Left ventricle myocardium inferior (tissue), 1 donor: ENCODE measurements at regions of chr5 and their contacts with region 1.

Region 1: DNA sequence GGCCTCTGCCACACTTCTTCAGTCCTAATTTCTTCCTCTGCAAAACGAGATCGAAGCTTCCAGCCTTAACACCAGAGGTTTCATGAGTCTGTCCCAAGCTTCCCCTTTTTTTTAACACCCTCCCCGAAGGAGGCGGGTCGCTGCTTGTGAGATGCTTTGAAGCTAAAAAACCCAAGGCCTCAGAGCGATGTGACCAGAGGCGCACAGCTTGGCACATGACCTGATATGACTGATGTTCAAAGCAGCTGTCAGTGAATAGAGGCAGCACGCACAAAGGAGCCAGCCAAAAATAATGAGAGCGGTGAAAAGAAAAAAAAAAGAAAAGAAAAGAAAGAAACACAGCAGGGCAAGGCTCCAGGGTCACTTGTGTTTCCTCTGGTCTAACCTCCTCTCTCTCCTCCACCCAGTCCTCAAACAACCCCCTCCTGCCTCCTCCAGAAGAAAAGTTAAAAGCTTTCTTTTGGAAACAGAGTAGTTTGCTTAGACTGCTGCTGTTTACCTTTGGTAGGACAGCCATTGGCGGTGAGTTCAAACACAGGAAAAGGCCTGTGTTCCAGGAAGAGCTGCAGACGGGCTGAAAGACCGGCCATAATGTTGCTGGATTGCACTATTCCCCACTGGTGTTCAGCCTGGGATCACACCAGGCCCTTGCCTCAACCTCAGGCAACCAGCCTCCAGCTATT is 10.9 kb upstream of the ZNF366 start:
- DNase-seq: peak; percentile 68
- H3K4me3 ChIP-seq: no peak overlapping the region
- H3K27ac ChIP-seq: peak overlapping the region; percentile 82
- H3K4me1 ChIP-seq: peaks cover 21% of the 10 kb centered on the region
- H3K27me3 ChIP-seq: no peaks in the 10 kb centered on the region
- CTCF ChIP-seq: no peak

Region 2: GRCh38 chr5:72451741-72452505 is 66.2 kb before region 1 on chr5:
- intact Hi-C with region 1: loop called (anchors 5 kb)
- DNase-seq: peak; percentile 76
- H3K4me3 ChIP-seq: no peak overlapping the region
- H3K27ac ChIP-seq: peak overlapping the region; percentile 95
- H3K4me1 ChIP-seq: peaks cover 74% of the 10 kb centered on the region
- H3K27me3 ChIP-seq: no peaks in the 10 kb centered on the region
- CTCF ChIP-seq: no peak